WTC11 (cell line): ENCODE measurements at regions of chr1 and their contacts with region 1.

Region 1: DNA sequence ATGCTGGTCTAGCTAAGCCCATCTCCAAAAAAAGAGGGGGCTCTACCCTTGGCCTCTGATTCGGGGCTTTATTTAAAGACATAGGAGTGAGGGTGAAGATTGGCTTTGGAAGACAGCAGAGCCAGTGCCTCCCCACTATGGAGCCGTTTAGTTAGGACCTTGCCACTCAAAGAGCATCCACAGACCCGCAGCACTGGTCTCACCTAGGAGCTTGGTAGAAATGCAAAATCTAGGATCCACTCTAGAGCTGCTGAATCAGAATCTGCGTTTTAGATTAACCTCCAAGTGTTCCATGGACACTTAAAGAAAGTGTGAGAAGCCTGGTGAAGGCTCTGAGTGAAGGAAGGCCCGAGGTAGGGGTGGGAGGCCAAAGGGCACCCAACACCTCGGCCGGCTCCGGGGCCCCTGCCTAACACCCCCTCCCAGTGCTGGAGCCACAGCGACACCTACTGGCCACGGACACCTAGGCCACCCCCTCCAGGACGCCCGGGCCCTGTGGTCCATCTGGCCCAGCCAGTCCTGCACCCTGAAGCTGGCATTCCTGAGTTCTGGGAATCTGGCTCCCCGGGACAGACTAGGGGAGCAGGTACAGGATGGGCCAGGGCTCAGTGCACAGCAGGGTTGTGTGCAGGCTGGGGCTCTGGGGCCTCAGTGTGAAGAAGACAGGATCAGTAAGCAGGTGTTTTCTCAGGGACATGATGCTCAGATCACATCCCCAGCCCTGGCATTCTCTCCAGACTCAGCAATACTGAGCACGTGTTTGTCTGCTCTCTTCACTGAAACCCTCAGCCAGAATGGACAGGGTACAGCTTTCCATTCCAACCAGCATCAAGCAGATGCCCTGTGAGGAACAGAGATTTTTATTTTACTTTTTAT is 79.2 kb downstream of the TMEM53 start:
- DNase-seq: peak; percentile 95
- ATAC-seq: peak; percentile 87
- H3K4me3 Mint-ChIP-seq: no peak overlapping the region
- H3K27ac Mint-ChIP-seq: no peak overlapping the region
- H3K4me1 Mint-ChIP-seq: peaks cover 29% of the 10 kb centered on the region
- H3K27me3 Mint-ChIP-seq: peaks cover 2% of the 10 kb centered on the region; the same call in 1 of the 2 replicates
- CTCF ChIP-seq: peak; percentile 98

Region 2: GRCh38 chr1:44213222-44214112 is 381.6 kb before region 1 on chr1 and contains the start of gene DMAP1:
- CTCF ChIA-PET with region 1: interaction called, 12 read pairs
- POLR2A ChIA-PET with region 1: no interaction called
- DNase-seq: peak; percentile 83
- ATAC-seq: peak; percentile 85
- H3K4me3 Mint-ChIP-seq: peak within 1 kb of the TSS; percentile 96
- H3K27ac Mint-ChIP-seq: no peak within 1 kb of the TSS
- H3K4me1 Mint-ChIP-seq: peaks cover 9% of the 10 kb centered on the region
- H3K27me3 Mint-ChIP-seq: peaks cover 18% of the 10 kb centered on the region
- CTCF ChIP-seq: no peak
- total RNA-seq, gene DMAP1: 40.9 to 44.4 TPM (median 42.3 TPM) in 3 replicates

Region 3: DNA sequence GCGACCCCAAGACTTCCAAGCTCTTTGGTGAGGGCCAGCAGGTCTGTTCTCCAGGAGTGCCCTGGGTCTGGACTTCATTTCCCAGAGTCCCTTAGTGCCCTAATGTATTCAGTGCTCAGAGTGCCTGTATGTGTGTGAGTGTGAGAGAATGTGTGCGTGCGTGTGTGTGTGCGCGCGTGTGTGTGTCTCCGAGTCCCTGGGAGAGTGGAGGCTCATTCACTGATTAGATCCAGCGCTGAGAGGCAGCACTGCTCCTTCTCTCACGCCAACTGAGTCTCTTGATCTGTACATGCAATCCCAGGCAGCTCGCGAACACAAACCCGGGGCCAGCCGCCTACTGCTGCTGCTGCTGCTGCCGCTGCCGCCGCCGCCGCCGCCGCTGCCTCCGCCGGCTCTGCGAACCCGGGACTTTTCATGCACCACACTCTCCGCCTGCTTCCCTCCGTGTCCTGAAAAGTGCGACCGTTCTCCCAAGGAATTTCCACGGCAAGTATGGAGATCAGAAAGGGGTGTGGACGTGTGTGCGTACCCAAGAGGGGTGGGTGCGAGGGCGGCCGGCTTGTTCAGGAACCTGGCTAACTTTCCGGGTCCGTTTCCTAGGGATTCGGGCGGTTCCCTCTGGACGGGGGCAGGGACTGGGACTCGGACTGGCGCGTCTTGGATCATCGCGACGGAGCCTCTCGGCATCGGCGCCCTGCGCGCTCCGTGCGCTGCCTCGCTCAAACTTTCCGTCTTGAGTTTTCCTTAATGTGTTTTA is 189.9 kb before region 1 on chr1 and contains the start of gene RNF220:
- CTCF ChIA-PET with region 1: interaction called, 10 read pairs
- POLR2A ChIA-PET with region 1: interaction called, 3 read pairs
- DNase-seq: peak; percentile 69
- ATAC-seq: peak; percentile 74
- H3K4me3 Mint-ChIP-seq: peak within 1 kb of the TSS; percentile 95
- H3K27ac Mint-ChIP-seq: peak within 1 kb of the TSS; percentile 96
- H3K4me1 Mint-ChIP-seq: 0 out of 2 replicates have a peak, but pooled peaks cover 3% of the 10 kb centered on the region
- H3K27me3 Mint-ChIP-seq: peaks cover 20% of the 10 kb centered on the region
- CTCF ChIP-seq: no peak
- total RNA-seq, gene RNF220: 117 to 128 TPM (median 124 TPM) in 3 replicates

Region 4: DNA sequence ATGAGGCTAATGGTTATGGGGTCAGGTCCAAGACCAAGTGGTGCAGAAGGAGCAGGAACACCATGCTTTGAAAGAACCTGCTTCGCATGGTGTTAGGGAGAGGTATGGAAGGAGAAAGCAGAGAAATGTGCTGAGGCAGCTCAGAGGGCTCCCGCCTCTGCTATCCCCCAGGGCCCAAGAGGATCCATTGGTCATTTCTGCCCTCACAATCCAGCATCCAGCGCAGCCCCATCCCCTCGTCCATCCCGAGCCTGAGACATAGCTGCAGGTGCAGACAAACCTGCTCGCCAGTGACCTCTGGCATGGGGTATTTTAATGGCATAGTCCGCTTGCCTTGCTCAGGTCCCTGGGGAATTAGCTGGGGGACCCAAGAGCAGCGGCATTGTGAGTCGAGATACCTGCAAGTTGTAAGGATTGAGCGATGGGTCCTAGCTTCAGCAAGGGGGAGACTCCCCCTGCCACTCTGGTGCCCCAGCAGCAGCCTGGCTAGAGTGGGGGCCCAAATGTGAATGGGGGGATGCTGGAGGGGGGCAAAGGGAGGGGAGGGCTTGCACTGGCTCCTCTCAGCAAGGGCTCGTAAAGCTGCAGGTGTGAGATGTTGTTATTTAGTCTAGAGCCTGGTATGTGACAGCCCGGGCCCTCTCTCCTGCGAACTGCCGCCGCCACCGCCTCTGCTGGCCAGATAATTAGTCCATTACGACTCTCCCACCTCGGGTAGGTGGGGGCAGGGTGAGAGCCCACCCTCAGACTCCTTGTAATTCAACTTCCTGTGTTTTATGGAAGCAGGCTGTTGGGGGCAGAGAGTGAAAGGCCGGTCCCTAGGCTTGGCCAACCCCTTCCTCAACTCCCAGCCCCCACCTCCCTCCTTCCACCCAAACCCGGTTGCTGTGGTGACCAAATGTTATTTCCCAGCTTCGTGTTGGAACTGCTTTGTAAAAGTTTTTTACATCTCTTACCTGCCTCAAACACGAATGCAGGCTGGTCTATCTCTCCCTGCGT is 71.2 kb before region 1 on chr1:
- CTCF ChIA-PET with region 1: interaction called, 18 read pairs
- POLR2A ChIA-PET with region 1: no interaction called
- DNase-seq: peak; percentile 76
- ATAC-seq: peak; percentile 95
- H3K4me3 Mint-ChIP-seq: no peak overlapping the region
- H3K27ac Mint-ChIP-seq: peak overlapping the region; percentile 86
- H3K4me1 Mint-ChIP-seq: peaks cover 26% of the 10 kb centered on the region
- H3K27me3 Mint-ChIP-seq: no peaks in the 10 kb centered on the region
- CTCF ChIP-seq: no peak

Region 5: DNA sequence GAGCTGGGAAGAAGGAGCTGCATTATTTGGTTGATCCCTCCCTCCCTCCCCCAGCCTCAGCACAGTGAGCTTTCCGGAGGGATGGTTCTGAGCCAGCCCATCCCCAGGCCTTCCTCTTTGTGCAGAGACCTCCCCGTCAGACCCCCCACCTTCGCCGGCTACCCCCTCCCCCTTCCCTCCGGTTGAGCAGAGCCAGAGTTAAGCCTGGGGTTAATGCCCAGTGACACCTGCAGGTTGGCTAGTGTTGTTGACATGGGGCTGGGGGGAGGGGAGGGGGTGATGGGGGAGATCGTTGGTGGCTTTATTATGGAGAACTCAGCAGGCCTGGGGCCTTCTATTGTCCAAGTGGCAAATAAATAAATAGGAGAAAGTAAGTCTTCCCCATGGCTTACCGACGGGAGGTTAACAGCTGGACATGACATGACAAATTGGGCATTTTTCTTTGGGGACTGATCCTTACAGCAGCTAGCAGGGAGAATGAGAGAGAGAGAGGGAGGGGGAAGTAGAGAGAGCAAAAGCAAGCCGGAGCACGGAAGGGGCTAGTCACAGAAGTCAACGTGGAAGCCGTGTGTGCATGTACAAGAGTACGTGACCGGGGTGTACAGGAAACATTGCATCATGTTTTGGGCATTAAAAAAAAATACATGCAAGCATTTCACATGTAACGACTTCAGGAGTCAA is 51.9 kb before region 1 on chr1:
- CTCF ChIA-PET with region 1: interaction called, 24 read pairs
- POLR2A ChIA-PET with region 1: interaction called, 4 read pairs
- DNase-seq: peak; percentile 94
- ATAC-seq: peak; percentile 93
- H3K4me3 Mint-ChIP-seq: peak overlapping the region; percentile 64
- H3K27ac Mint-ChIP-seq: peak overlapping the region; percentile 99
- H3K4me1 Mint-ChIP-seq: peaks cover 78% of the 10 kb centered on the region
- H3K27me3 Mint-ChIP-seq: peaks cover 28% of the 10 kb centered on the region
- CTCF ChIP-seq: no peak

Region 6: GRCh38 chr1:44571712-44572571 is 23.2 kb before region 1 on chr1:
- CTCF ChIA-PET with region 1: interaction called, 29 read pairs
- POLR2A ChIA-PET with region 1: interaction called, 3 read pairs
- DNase-seq: no peak
- ATAC-seq: peak; percentile 46
- H3K4me3 Mint-ChIP-seq: no peak overlapping the region
- H3K27ac Mint-ChIP-seq: no peak overlapping the region
- H3K4me1 Mint-ChIP-seq: peaks cover 22% of the 10 kb centered on the region
- H3K27me3 Mint-ChIP-seq: peaks cover 3% of the 10 kb centered on the region; the same call in 1 of the 2 replicates
- CTCF ChIP-seq: no peak; the same call in 1 of the 2 replicates

Region 7: GRCh38 chr1:44609412-44609767 is 14.3 kb after region 1 on chr1:
- CTCF ChIA-PET with region 1: interaction called, 46 read pairs
- POLR2A ChIA-PET with region 1: no interaction called
- DNase-seq: peak; percentile 88
- ATAC-seq: peak; percentile 88
- H3K4me3 Mint-ChIP-seq: no peak overlapping the region
- H3K27ac Mint-ChIP-seq: no peak overlapping the region
- H3K4me1 Mint-ChIP-seq: peaks cover 11% of the 10 kb centered on the region
- H3K27me3 Mint-ChIP-seq: no peaks in the 10 kb centered on the region
- CTCF ChIP-seq: peak; percentile 29; the same call in 1 of the 2 replicates

Region 8: DNA sequence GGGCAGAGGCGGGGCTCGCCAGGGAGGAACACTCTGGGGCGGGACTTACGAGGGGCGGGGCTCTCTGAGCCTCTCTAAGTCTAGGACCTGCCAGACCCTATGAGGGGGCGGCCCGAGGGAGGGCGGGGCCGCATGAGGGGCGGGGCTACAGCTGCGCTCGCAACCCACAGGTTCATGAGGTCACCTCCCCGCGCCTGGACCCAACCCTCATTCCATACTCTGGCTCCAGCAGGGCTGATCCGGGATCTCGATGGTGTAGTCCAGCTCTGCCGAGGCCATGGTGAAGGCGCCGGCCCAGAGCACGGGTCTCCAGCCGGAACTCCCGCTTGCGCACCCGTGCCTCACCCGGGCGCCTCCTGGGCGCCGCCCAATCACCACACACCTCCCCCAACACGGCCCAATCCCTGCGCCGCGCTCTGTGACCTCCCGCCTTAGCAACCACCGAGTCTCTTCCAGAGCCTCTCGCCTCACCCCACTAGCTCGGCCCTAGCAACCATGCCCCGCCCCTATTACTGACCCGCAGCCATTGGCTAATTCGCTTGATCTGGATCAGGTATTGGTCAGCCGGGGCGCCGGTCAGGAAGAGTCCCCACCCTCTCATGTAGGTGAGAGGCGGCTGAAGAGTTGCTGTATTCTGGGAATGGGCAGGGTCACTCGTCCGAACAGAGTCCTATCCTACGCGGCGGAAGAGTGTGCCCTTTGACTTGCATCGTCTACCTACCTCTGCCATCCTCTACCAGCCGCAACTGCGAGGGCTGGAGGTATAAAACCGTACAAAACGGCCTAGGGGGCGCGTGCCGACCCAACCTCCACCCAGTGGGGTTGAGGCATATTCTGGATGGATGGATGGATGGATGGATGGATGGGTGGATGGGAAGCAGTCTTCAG is 79.2 kb after region 1 on chr1 and contains the starts of genes ARMH1 and TMEM53:
- CTCF ChIA-PET with region 1: no interaction called
- POLR2A ChIA-PET with region 1: no interaction called
- DNase-seq: peak; percentile 99
- ATAC-seq: peak; percentile 94
- H3K4me3 Mint-ChIP-seq: peak within 1 kb of the TSS; percentile 92
- H3K27ac Mint-ChIP-seq: peak within 1 kb of the TSS; percentile 80; the same call in 1 of the 2 replicates
- H3K4me1 Mint-ChIP-seq: peaks cover 23% of the 10 kb centered on the region
- H3K27me3 Mint-ChIP-seq: no peaks in the 10 kb centered on the region
- CTCF ChIP-seq: no peak
- total RNA-seq, gene ARMH1: 0.74 to 1.6 TPM (median 0.78 TPM) in 3 replicates
- total RNA-seq, gene TMEM53: 8.2 to 10.9 TPM (median 10.0 TPM) in 3 replicates